ENCODE measurements at regions of chrX and their contacts with region 1.

Region 1: GRCh38 chrX:55160685-55161552 is 59.2 kb upstream of the PAGE5 start:
- DNase-seq: peak; percentile 90 to 94 (median 92)
- ATAC-seq: peak; percentile 99 to 100 (median 100)
- H3K4me3 ChIP-seq: peak overlapping the region; percentile 36 to 83 (median 59)
- H3K27ac ChIP-seq: peak overlapping the region; percentile 86 to 95 (median 92)
- H3K4me1 ChIP-seq: peaks cover 0 to 12% (median 0%) of the 10 kb centered on the region in 12 donors
- H3K27me3 ChIP-seq: peaks cover 0 to 8% (median 0%) of the 10 kb centered on the region in 9 donors
- CTCF ChIP-seq: peak in 11 of 12 donors; percentile 6 to 59 (median 40)
- POLR2A ChIP-seq: peak in 1 of 2 donors; percentile 83

Region 2: GRCh38 chrX:54044126-54044876 is 1116.6 kb before region 1 on chrX and contains the start of gene PHF8:
- intact Hi-C with region 1: loop called in 1 of 10 experiments (anchors 10 kb)
- DNase-seq: peak; percentile 94 to 96 (median 95)
- ATAC-seq: peak; percentile 92 to 95 (median 95)
- H3K4me3 ChIP-seq: peak within 1 kb of the TSS; percentile 48 to 98 (median 79)
- H3K27ac ChIP-seq: peak within 1 kb of the TSS; percentile 88 to 99 (median 96)
- H3K4me1 ChIP-seq: peaks cover 0 to 6% (median 0%) of the 10 kb centered on the region in 12 donors
- H3K27me3 ChIP-seq: no peaks in the 10 kb centered on the region
- CTCF ChIP-seq: no peak
- POLR2A ChIP-seq: no peak
- total RNA-seq, gene PHF8: 8.4 to 13.6 (median 9.7) TPM

Region 3: DNA sequence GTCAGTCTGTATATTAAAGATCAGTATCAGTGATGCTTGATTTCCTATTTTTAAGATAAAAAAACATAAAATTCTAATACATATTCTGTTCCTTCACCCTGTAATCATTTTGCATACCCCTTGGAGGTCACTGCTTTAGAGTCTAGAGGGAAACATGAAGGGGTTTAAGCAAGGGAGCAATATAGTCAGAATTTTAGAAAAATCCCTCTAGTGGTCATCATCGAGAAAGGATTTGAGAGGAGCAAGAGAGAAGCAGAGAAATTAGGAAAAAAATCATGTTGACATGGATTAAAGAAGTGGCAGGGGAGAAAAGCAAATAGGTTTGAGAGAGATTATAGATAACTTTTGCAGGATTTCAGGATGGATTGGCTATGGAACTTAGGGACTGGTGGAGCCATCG is 149.6 kb before region 1 on chrX:
- intact Hi-C with region 1: no loop called
- DNase-seq: no peak
- ATAC-seq: no peak
- H3K4me3 ChIP-seq: no peak overlapping the region
- H3K27ac ChIP-seq: no peak overlapping the region
- H3K4me1 ChIP-seq: peaks cover 0 to 32% (median 8%) of the 10 kb centered on the region in 12 donors
- H3K27me3 ChIP-seq: peaks cover 0 to 12% (median 0%) of the 10 kb centered on the region in 9 donors
- CTCF ChIP-seq: peak in 2 of 12 donors; percentile 10 to 11
- POLR2A ChIP-seq: no peak

Region 4: DNA sequence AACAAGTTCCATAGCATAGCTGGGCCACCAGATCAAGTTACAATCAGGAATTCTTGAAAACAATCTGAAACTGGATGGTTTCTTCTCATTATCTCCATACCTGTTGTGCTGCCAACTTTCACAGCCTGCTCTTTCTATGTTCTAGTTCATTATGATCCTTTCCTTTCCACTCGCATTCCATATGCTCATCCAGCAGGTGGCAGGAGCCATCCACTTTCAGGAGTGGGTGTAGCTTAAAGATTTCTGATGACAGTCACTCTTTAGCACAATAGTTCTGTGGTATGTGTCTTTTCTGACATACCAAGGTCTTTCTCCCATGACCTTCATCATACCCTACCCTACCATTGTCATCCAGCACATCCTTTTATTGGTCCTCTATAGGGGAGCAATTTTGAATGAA is 25.7 kb before region 1 on chrX:
- intact Hi-C with region 1: loop called in 1 of 10 experiments (anchors 2 kb)
- DNase-seq: peak; percentile 9 to 51 (median 27)
- ATAC-seq: peak in 3 of 4 donors; percentile 59 to 65 (median 60)
- H3K4me3 ChIP-seq: no peak overlapping the region
- H3K27ac ChIP-seq: no peak overlapping the region
- H3K4me1 ChIP-seq: no peaks in the 10 kb centered on the region
- H3K27me3 ChIP-seq: peaks cover 0 to 10% (median 0%) of the 10 kb centered on the region in 9 donors
- CTCF ChIP-seq: peak; percentile 36 to 64 (median 54)
- POLR2A ChIP-seq: no peak

Region 5: GRCh38 chrX:55342533-55343501 is 181.9 kb after region 1 on chrX:
- intact Hi-C with region 1: loop called in 1 of 10 experiments (anchors 5 kb)
- DNase-seq: peak in 2 of 5 donors; percentile 17 to 27
- ATAC-seq: peak in 3 of 4 donors; percentile 55 to 64 (median 58)
- H3K4me3 ChIP-seq: peak overlapping the region in 1 of 12 donors; percentile 9
- H3K27ac ChIP-seq: peak overlapping the region in 9 of 12 donors; percentile 2 to 61 (median 45)
- H3K4me1 ChIP-seq: no peaks in the 10 kb centered on the region
- H3K27me3 ChIP-seq: peaks cover 0 to 14% (median 0%) of the 10 kb centered on the region in 9 donors
- CTCF ChIP-seq: peak; percentile 35 to 60 (median 47)
- POLR2A ChIP-seq: no peak

Region 6: GRCh38 chrX:56563231-56564161 is 1402.6 kb after region 1 on chrX and contains the start of gene UBQLN2:
- intact Hi-C with region 1: loop called in 1 of 10 experiments (anchors 10 kb)
- DNase-seq: peak; percentile 85 to 90 (median 86)
- ATAC-seq: peak; percentile 94 to 98 (median 98)
- H3K4me3 ChIP-seq: peak within 1 kb of the TSS; percentile 28 to 88 (median 72)
- H3K27ac ChIP-seq: peak within 1 kb of the TSS; percentile 90 to 99 (median 94)
- H3K4me1 ChIP-seq: peaks cover 0 to 35% (median 14%) of the 10 kb centered on the region in 12 donors
- H3K27me3 ChIP-seq: peaks cover 0 to 3% (median 0%) of the 10 kb centered on the region in 9 donors
- CTCF ChIP-seq: peak in 5 of 12 donors; percentile 12 to 34 (median 28)
- POLR2A ChIP-seq: peak in 1 of 2 donors; percentile 60
- total RNA-seq, gene UBQLN2: 26.9 to 41.8 (median 34.4) TPM

Measured in heart left ventricle (tissue), 16 donors.